ENCODE measurements at regions of chr11 and their contacts with region 1.

Region 1: DNA sequence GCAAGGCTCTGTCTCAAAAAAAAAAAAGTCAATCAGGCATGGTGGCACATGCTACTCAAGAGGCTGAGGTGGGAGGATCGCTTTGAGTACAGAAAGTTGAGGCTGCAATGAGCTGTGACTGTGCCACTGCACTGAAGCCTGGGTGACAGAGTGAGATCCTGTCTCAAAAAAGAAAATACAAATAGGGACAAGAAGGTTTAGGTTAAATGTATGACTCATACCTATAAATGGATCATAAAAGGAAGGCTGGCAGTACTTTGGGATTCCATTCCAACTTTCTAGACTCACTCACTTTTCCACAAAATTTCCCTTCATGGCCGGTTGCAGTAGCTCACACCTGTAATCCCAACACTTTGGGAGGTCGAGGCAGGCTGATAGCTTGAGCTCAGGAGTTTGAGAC is 25.6 kb upstream of the OSBP start:
- DNase-seq: no peak
- H3K4me3 ChIP-seq: no peak overlapping the region
- H3K27ac ChIP-seq: no peak overlapping the region
- H3K4me1 ChIP-seq: no peaks in the 10 kb centered on the region
- H3K27me3 ChIP-seq: no peaks in the 10 kb centered on the region
- CTCF ChIP-seq: no peak
- POLR2A ChIP-seq: no peak

Region 2: DNA sequence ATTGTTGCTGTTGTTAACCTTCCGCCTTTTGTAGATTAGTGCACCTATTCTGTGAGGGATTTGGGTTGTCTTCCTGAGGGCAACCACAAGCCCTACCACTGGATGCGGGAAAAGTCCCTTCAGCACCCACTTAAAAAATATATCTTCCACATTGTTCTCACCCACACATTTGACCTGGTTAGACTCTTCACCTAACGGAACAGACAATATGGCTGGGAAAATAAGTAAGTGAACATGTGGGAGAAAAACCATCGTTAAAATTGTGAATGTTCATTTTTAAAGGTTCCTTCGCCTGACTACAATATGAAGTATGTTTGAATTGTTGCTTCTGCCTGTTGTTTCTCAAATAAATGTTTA is 356.4 kb before region 1 on chr11:
- intact Hi-C with region 1: no loop called
- DNase-seq: no peak
- H3K4me3 ChIP-seq: no peak overlapping the region
- H3K27ac ChIP-seq: no peak overlapping the region
- H3K4me1 ChIP-seq: no peaks in the 10 kb centered on the region
- H3K27me3 ChIP-seq: no peaks in the 10 kb centered on the region
- CTCF ChIP-seq: no peak
- POLR2A ChIP-seq: no peak

Region 3: GRCh38 chr11:59660621-59661020 is 19.5 kb after region 1 on chr11:
- intact Hi-C with region 1: no loop called
- DNase-seq: no peak
- H3K4me3 ChIP-seq: no peak overlapping the region
- H3K27ac ChIP-seq: no peak overlapping the region
- H3K4me1 ChIP-seq: no peaks in the 10 kb centered on the region
- H3K27me3 ChIP-seq: no peaks in the 10 kb centered on the region
- CTCF ChIP-seq: no peak
- POLR2A ChIP-seq: no peak

Region 4: GRCh38 chr11:60155931-60156330 is 514.8 kb after region 1 on chr11:
- intact Hi-C with region 1: no loop called
- DNase-seq: no peak
- H3K4me3 ChIP-seq: no peak overlapping the region
- H3K27ac ChIP-seq: no peak overlapping the region
- H3K4me1 ChIP-seq: no peaks in the 10 kb centered on the region
- H3K27me3 ChIP-seq: no peaks in the 10 kb centered on the region
- CTCF ChIP-seq: no peak
- POLR2A ChIP-seq: no peak

Region 5: GRCh38 chr11:60717956-60718355 is 1076.8 kb after region 1 on chr11:
- intact Hi-C with region 1: loop called (anchors 5 kb)
- DNase-seq: no peak
- H3K4me3 ChIP-seq: no peak overlapping the region
- H3K27ac ChIP-seq: no peak overlapping the region
- H3K4me1 ChIP-seq: no peaks in the 10 kb centered on the region
- H3K27me3 ChIP-seq: no peaks in the 10 kb centered on the region
- CTCF ChIP-seq: no peak
- POLR2A ChIP-seq: no peak